ENCODE measurements at regions of chr12 and their contacts with region 1.

Region 1: GRCh38 chr12:42332301-42333285 is 6.6 kb downstream of the PPHLN1 start:
- DNase-seq: peak; percentile 67
- H3K4me3 ChIP-seq: no peak overlapping the region
- H3K27ac ChIP-seq: no peak overlapping the region
- H3K4me1 ChIP-seq: peaks cover 6% of the 10 kb centered on the region
- H3K27me3 ChIP-seq: no peaks in the 10 kb centered on the region
- CTCF ChIP-seq: peak; percentile 33 to 53
- POLR2A ChIP-seq: no peak

Region 2: GRCh38 chr12:40946612-40947194 is 1385.9 kb before region 1 on chr12:
- CTCF ChIA-PET with region 1: interaction called, 13 read pairs
- POLR2A ChIA-PET with region 1: no interaction called
- dilution Hi-C with region 1: no loop called
- intact Hi-C with region 1: no loop called
- DNase-seq: peak; percentile 55
- H3K4me3 ChIP-seq: no peak overlapping the region
- H3K27ac ChIP-seq: no peak overlapping the region
- H3K4me1 ChIP-seq: no peaks in the 10 kb centered on the region
- H3K27me3 ChIP-seq: no peaks in the 10 kb centered on the region
- CTCF ChIP-seq: peak in 1 of 2 donors; percentile 41
- POLR2A ChIP-seq: no peak

Region 3: DNA sequence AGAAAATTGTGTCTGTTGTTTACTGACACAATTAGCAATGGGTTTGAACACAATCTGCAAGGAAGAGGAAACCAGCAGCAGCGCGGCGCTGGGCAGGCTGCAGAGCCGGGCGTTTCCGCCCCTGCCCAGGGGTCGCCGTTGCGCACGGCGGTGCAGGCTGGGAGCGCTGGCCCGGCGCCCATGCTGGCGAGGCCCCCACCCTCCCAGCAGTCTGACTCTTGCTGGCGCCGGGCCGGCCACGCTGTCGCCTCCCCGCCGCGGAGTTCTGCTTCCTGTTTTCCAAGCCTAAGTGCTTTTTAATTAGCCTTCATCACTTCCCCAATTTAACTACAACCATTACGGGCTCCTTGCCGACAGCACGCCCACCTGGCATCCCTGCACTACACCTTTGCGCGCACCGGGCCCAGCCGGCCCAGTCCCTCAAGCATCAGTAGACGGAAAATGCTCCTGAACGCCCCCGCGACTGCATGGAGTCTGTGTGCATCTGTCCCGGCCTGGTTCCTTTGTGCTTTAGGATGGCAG is 400.1 kb before region 1 on chr12:
- CTCF ChIA-PET with region 1: no interaction called
- POLR2A ChIA-PET with region 1: no interaction called
- dilution Hi-C with region 1: no loop called
- intact Hi-C with region 1: loop called (anchors 10 kb)
- DNase-seq: peak; percentile 90
- H3K4me3 ChIP-seq: peak overlapping the region; percentile 25 to 46 (median 26)
- H3K27ac ChIP-seq: peak overlapping the region; percentile 61
- H3K4me1 ChIP-seq: peaks cover 13% of the 10 kb centered on the region
- H3K27me3 ChIP-seq: no peaks in the 10 kb centered on the region
- CTCF ChIP-seq: no peak
- POLR2A ChIP-seq: no peak

Region 4: DNA sequence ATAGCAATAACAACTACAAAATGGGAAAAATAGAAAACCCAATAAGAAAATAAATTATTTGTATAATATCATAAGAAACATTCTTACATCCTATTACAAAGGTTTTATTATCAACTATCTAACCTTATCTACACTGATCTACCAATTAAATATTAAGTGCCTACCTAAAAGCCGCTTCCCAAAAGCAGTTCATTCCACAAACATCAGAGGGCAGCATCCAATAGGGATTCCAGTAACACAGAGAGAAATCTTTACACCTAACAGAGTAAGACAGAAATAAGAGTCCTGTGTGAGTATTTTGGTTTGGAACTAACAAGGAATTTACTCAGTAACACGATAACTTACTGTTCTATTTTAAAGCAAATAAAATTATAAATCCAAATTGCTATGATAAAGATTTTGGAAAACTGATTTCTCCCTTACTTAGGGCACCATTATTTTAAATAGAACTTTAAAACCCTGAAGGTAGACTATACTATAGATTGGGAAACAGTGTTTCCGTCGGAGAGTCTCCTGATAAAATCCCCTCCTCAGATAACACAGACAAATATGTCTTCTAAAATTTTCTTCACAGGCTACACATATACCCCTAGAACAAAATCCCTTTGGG is 202.9 kb before region 1 on chr12:
- CTCF ChIA-PET with region 1: interaction called, 34 read pairs
- POLR2A ChIA-PET with region 1: no interaction called
- dilution Hi-C with region 1: no loop called
- intact Hi-C with region 1: loop called (anchors 1 kb)
- DNase-seq: peak; percentile 86
- H3K4me3 ChIP-seq: no peak overlapping the region
- H3K27ac ChIP-seq: no peak overlapping the region
- H3K4me1 ChIP-seq: peaks cover 22% of the 10 kb centered on the region
- H3K27me3 ChIP-seq: no peaks in the 10 kb centered on the region
- CTCF ChIP-seq: peak; percentile 54 to 62
- POLR2A ChIP-seq: no peak

Region 5: GRCh38 chr12:42144408-42145196 is 188.0 kb before region 1 on chr12 and contains the start of gene GXYLT1:
- CTCF ChIA-PET with region 1: interaction called, 10 read pairs
- POLR2A ChIA-PET with region 1: no interaction called
- dilution Hi-C with region 1: no loop called
- intact Hi-C with region 1: no loop called
- DNase-seq: peak; percentile 95
- H3K4me3 ChIP-seq: peak within 1 kb of the TSS; percentile 86 to 93 (median 89)
- H3K27ac ChIP-seq: peak within 1 kb of the TSS; percentile 62
- H3K4me1 ChIP-seq: peaks cover 14% of the 10 kb centered on the region
- H3K27me3 ChIP-seq: no peaks in the 10 kb centered on the region
- CTCF ChIP-seq: no peak
- POLR2A ChIP-seq: peak; percentile 54
- total RNA-seq, gene GXYLT1: 23.0 and 23.4 TPM in 2 replicates

Region 6: GRCh38 chr12:42237052-42237852 is 95.3 kb before region 1 on chr12:
- CTCF ChIA-PET with region 1: interaction called, 3 read pairs
- POLR2A ChIA-PET with region 1: no interaction called
- dilution Hi-C with region 1: no loop called
- intact Hi-C with region 1: loop called (anchors 1 kb)
- DNase-seq: peak; percentile 68
- H3K4me3 ChIP-seq: peak overlapping the region; percentile 39 to 98 (median 70)
- H3K27ac ChIP-seq: peak overlapping the region; percentile 41
- H3K4me1 ChIP-seq: peaks cover 13% of the 10 kb centered on the region
- H3K27me3 ChIP-seq: no peaks in the 10 kb centered on the region
- CTCF ChIP-seq: peak; percentile 29 to 53
- POLR2A ChIP-seq: no peak

Region 7: DNA sequence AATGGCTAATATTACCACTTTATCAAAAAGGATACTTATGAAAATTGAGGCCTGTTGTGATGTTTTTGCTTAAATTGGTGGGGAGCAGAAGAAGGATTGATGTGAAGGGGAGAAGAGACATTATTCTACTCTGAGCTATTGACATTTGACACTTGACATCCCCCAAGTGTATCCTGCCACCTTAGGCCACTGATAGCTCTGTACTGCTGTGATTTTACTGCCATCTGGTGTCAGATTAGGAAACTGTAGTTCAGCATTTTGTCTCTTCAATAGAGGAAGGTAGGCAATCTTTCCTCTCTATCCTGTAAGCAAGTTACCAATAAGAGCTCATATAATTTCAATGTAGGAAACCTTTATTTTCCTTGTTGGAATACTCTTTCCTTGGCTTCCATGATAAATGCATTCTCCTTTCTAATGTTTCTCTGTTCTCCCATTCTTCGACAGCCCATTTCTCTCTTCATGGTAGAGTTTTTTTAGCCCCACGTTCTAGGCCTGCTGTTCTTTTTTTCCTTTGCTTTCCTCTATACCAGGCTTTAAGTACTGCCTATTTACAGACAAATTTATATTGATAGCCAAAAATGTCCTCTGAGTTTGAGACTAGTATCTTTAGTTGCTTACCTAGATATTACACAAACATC is 39.7 kb after region 1 on chr12:
- CTCF ChIA-PET with region 1: interaction called, 11 read pairs
- POLR2A ChIA-PET with region 1: no interaction called
- dilution Hi-C with region 1: no loop called
- intact Hi-C with region 1: no loop called
- DNase-seq: peak; percentile 57
- H3K4me3 ChIP-seq: no peak overlapping the region
- H3K27ac ChIP-seq: no peak overlapping the region
- H3K4me1 ChIP-seq: no peaks in the 10 kb centered on the region
- H3K27me3 ChIP-seq: no peaks in the 10 kb centered on the region
- CTCF ChIP-seq: peak; percentile 53 to 57
- POLR2A ChIP-seq: no peak

Region 8: GRCh38 chr12:42421844-42422779 is 89.5 kb after region 1 on chr12:
- CTCF ChIA-PET with region 1: no interaction called
- POLR2A ChIA-PET with region 1: no interaction called
- dilution Hi-C with region 1: no loop called
- intact Hi-C with region 1: no loop called
- DNase-seq: peak; percentile 96
- H3K4me3 ChIP-seq: no peak overlapping the region
- H3K27ac ChIP-seq: peak overlapping the region; percentile 93
- H3K4me1 ChIP-seq: peaks cover 53% of the 10 kb centered on the region
- H3K27me3 ChIP-seq: no peaks in the 10 kb centered on the region
- CTCF ChIP-seq: no peak
- POLR2A ChIP-seq: no peak

Measured in endothelial cell of umbilical vein (primary cell).